Activated CD8-positive, alpha-beta memory T cell treated with anti-CD3 and anti-CD28 coated beads, Interleukin-2, amount 10 ng/mL, durations not matched to agents 7 days and 5 days (primary cell): ENCODE measurements at regions of chr5 and their contacts with region 1.

Region 1: GRCh38 chr5:59188419-59189225 is 605.7 kb downstream of the RAB3C start:
- DNase-seq: peak; percentile 75
- ATAC-seq: peak; percentile 78
- H3K4me3 Mint-ChIP-seq: peak overlapping the region; percentile 21
- H3K27ac Mint-ChIP-seq: no peak overlapping the region
- H3K4me1 Mint-ChIP-seq: peaks cover 13% of the 10 kb centered on the region
- H3K27me3 Mint-ChIP-seq: peaks cover 42% of the 10 kb centered on the region

Region 2: GRCh38 chr5:59107692-59108091 is 80.9 kb before region 1 on chr5:
- CTCF ChIA-PET with region 1: no interaction called
- DNase-seq: no peak
- ATAC-seq: no peak
- H3K4me3 Mint-ChIP-seq: no peak overlapping the region
- H3K27ac Mint-ChIP-seq: no peak overlapping the region
- H3K4me1 Mint-ChIP-seq: peaks cover 29% of the 10 kb centered on the region
- H3K27me3 Mint-ChIP-seq: no peaks in the 10 kb centered on the region

Region 3: GRCh38 chr5:59206132-59206581 is 17.5 kb after region 1 on chr5:
- CTCF ChIA-PET with region 1: interaction called, 10 read pairs
- DNase-seq: no peak
- ATAC-seq: no peak
- H3K4me3 Mint-ChIP-seq: no peak overlapping the region
- H3K27ac Mint-ChIP-seq: no peak overlapping the region
- H3K4me1 Mint-ChIP-seq: no peaks in the 10 kb centered on the region
- H3K27me3 Mint-ChIP-seq: peaks cover 3% of the 10 kb centered on the region

Region 4: DNA sequence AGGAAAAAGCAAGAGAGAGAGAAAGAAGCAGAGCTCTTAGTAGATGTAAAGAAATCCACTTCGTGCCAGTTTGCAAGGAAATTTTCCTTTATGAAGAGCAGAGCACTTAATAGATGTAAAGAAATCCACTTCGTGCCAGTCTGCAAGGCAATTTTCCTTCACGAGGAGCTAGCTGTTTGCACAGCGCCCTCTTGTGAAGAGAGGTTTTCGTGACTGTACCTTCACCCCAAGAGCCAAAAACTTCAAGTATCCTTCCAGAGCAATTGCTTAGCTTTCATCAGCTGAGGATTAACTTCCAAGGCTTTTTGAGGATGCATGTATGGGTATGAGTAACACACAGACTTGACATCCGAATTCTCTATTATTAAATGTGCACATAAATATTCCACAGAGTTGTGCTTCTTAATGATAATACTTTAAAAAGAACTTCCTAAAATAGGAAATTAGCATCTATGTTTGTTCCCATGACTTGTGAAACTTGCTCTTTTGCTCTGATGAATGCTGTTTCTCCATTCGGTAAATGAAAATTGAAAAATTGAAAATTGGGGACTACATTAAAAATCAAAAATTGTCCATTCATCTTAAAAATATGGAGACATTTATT is 179.3 kb after region 1 on chr5:
- CTCF ChIA-PET with region 1: interaction called, 47 read pairs
- DNase-seq: peak; percentile 62
- ATAC-seq: no peak
- H3K4me3 Mint-ChIP-seq: no peak overlapping the region
- H3K27ac Mint-ChIP-seq: no peak overlapping the region
- H3K4me1 Mint-ChIP-seq: peaks cover 13% of the 10 kb centered on the region
- H3K27me3 Mint-ChIP-seq: peaks cover 36% of the 10 kb centered on the region

Region 5: GRCh38 chr5:59380350-59380951 is 191.8 kb after region 1 on chr5:
- CTCF ChIA-PET with region 1: interaction called, 52 read pairs
- DNase-seq: peak; percentile 73
- ATAC-seq: peak; percentile 96
- H3K4me3 Mint-ChIP-seq: no peak overlapping the region
- H3K27ac Mint-ChIP-seq: peak overlapping the region; percentile 16
- H3K4me1 Mint-ChIP-seq: peaks cover 5% of the 10 kb centered on the region
- H3K27me3 Mint-ChIP-seq: peaks cover 19% of the 10 kb centered on the region

Region 6: DNA sequence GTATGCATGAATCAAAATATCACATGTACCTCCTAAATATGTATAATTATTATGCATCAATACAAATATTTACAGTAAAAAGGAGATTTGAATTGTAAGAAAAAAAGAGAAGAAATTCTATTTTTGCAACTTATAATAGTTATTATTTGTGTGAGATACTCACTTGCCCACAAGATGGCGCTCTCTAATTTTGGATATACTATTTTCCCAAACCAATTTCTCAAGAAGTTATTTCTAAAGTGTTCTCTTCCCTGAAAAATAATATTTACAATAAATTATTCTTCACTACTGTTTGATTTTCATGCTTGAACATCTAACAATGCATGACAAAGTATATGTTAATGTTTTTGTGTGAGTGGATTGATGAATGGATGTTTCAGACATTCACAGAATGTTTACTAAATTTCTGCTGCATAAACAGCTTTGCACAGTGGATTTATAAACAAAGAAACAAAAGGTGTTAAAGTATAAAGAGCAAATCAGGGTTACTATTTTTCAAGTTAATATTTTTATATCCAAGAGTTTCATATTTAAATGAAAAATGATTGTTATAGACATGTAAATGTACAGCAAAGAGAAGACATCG is 201.5 kb after region 1 on chr5:
- CTCF ChIA-PET with region 1: interaction called, 12 read pairs
- DNase-seq: no peak
- ATAC-seq: no peak
- H3K4me3 Mint-ChIP-seq: no peak overlapping the region
- H3K27ac Mint-ChIP-seq: no peak overlapping the region
- H3K4me1 Mint-ChIP-seq: no peaks in the 10 kb centered on the region
- H3K27me3 Mint-ChIP-seq: peaks cover 30% of the 10 kb centered on the region